Aorta (tissue), 5 donors: ENCODE measurements at regions of chr1 and their contacts with region 1.

Region 1: GRCh38 chr1:237386362-237387143 is 344.6 kb downstream of the RYR2 start:
- DNase-seq: no peak
- ATAC-seq: no peak
- H3K4me3 ChIP-seq: no peak overlapping the region
- H3K27ac ChIP-seq: no peak overlapping the region
- H3K4me1 ChIP-seq: peaks cover 0 to 6% of the 10 kb centered on the region in 2 donors
- H3K27me3 ChIP-seq: no peaks in the 10 kb centered on the region

Region 2: GRCh38 chr1:236870721-236871120 is 515.8 kb before region 1 on chr1:
- intact Hi-C with region 1: loop called in 1 of 2 experiments (anchors 10 kb)
- DNase-seq: no peak
- ATAC-seq: no peak
- H3K4me3 ChIP-seq: no peak overlapping the region
- H3K27ac ChIP-seq: no peak overlapping the region
- H3K4me1 ChIP-seq: no peaks in the 10 kb centered on the region
- H3K27me3 ChIP-seq: no peaks in the 10 kb centered on the region

Region 3: GRCh38 chr1:237041795-237042525 is 344.6 kb before region 1 on chr1 and contains the start of gene RYR2:
- intact Hi-C with region 1: loop called in 1 of 2 experiments (anchors 5 kb)
- DNase-seq: peak; percentile 51 to 84
- ATAC-seq: peak; percentile 67
- H3K4me3 ChIP-seq: peak within 1 kb of the TSS; percentile 51 to 68
- H3K27ac ChIP-seq: peak within 1 kb of the TSS; percentile 15 to 86
- H3K4me1 ChIP-seq: peaks cover 0 to under 1% of the 10 kb centered on the region in 2 donors
- H3K27me3 ChIP-seq: no peaks in the 10 kb centered on the region
- total RNA-seq, gene RYR2: 31.3 to 128 TPM

Region 4: DNA sequence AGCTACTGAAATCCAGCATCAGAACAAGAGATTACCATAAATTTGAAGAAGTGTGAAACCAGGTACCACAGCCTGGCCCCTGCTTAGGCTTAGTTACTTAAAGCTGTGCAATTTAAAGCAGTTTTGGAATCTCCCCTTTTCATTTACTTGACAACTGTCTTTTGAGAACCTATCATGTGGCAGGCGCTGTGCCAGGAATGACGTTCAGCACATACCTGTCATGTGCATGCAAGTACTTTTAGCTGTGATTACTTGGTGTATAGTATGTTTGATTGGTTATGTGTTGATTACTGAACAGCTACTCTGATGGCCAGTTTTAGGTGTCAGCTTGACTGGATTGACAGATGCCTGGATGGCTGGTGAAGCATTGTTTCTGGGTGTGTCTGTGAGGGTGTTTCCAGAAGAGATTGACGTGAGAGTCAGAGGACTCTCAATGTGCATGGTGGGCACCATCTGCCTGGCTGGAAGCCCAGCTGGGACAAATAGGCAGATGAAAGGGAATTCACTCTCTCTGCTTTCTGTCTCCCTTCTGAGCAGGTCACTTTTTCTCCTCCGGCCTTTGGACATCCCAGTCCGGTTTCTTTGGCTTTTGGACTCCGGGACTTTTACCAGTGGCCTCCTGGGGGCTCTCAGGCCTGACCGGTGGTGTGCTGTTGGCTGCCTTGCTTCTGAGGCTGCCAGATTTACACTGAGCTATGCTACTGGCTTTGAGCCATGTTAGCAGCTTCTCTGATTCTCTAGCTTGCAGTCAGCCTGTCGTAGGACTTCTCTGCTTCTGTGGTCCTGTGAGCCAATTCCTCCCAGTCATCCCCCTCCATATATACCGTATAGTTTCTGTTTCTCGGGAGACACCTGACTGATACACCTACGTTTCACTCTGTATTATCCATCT is 166.6 kb before region 1 on chr1:
- intact Hi-C with region 1: loop called in 1 of 2 experiments (anchors 10 kb)
- DNase-seq: peak; percentile 48 to 76
- ATAC-seq: peak; percentile 71
- H3K4me3 ChIP-seq: no peak overlapping the region
- H3K27ac ChIP-seq: peak overlapping the region in 1 of 2 donors; percentile 44
- H3K4me1 ChIP-seq: peaks cover 4% of the 10 kb centered on the region in 2 donors
- H3K27me3 ChIP-seq: no peaks in the 10 kb centered on the region

Region 5: GRCh38 chr1:237281481-237281880 is 105.1 kb before region 1 on chr1:
- intact Hi-C with region 1: no loop called
- DNase-seq: no peak
- ATAC-seq: no peak
- H3K4me3 ChIP-seq: no peak overlapping the region
- H3K27ac ChIP-seq: no peak overlapping the region
- H3K4me1 ChIP-seq: peaks cover 0 to 2% of the 10 kb centered on the region in 2 donors
- H3K27me3 ChIP-seq: no peaks in the 10 kb centered on the region